Sciatic nerve (tissue), 2 donors: ENCODE measurements at regions of chr6 and their contacts with region 1.

Region 1: GRCh38 chr6:55208471-55208870 is 34.2 kb downstream of the HCRTR2 start:
- DNase-seq: no peak
- ATAC-seq: no peak

Region 2: DNA sequence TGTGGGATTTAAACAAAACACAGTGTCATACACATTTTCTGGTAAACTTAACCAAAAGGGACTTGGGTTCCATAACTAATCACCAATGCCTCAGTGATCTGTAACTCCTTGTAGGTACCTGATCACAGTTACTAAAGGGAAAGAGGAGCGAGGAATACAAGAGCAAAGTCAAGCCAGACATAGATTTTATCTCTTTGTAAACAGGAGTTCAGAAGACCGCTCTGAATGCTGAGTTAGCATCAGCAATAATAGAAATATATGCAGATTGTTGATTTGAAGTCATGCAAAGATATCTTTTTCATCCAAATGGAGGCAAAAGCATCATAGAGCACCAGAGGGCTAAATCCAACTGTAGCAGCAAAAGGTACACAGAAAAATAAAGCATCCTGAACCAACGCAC is 20.3 kb before region 1 on chr6:
- intact Hi-C with region 1: loop called (anchors 1 kb)
- DNase-seq: no peak
- ATAC-seq: no peak

Region 3: DNA sequence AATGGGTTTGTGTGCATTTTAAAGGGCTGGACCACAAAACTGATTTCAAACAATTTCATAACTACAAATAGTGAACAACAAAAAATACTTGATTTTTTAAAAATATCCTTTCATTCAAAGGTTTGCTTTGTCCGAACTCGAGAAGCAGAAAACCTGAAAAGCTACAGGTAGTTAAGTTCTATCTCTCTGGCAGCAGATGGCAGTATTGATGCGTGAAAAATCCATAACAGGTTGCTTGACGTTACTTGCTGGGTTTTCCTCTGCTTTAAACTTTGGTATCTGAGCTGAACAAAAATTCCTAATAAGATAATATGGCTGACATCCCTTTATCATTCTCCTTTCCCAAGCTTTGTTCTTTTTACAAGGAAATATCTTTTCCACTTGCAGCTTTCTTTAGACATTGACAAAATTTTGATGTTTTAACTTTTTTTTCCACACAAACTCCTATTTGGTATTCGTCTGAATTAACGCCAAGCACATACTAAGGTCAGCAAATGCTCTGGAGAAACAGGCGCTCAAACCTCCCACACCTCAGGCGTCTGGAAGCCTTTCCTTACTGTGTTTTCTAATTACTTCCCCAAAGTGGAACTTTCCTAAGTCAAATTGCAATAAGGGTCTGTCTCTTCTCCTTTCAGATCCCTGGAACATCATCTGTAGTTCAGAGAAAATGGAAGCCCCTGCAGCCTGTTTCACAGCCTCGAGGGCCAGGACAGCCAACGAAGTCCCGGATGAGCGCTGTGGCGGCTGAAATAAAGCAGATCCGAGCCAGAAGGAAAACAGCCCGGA is 68.5 kb after region 1 on chr6:
- intact Hi-C with region 1: no loop called
- DNase-seq: no peak
- ATAC-seq: peak; percentile 89